Gastrocnemius medialis (tissue), 4 donors: ENCODE measurements at regions of chr2 and their contacts with region 1.

Region 1: GRCh38 chr2:113337809-113338208 is 59.1 kb upstream of the PAX8 start:
- DNase-seq: peak; percentile 87 to 94
- ATAC-seq: peak; percentile 89 to 92
- H3K4me3 ChIP-seq: no peak overlapping the region
- H3K27ac ChIP-seq: peak overlapping the region; percentile 78 to 84 (median 82)
- H3K4me1 ChIP-seq: peaks cover 23 to 39% of the 10 kb centered on the region in 2 donors
- H3K27me3 ChIP-seq: no peaks in the 10 kb centered on the region
- CTCF ChIP-seq: no peak
- POLR2A ChIP-seq: no peak

Region 2: DNA sequence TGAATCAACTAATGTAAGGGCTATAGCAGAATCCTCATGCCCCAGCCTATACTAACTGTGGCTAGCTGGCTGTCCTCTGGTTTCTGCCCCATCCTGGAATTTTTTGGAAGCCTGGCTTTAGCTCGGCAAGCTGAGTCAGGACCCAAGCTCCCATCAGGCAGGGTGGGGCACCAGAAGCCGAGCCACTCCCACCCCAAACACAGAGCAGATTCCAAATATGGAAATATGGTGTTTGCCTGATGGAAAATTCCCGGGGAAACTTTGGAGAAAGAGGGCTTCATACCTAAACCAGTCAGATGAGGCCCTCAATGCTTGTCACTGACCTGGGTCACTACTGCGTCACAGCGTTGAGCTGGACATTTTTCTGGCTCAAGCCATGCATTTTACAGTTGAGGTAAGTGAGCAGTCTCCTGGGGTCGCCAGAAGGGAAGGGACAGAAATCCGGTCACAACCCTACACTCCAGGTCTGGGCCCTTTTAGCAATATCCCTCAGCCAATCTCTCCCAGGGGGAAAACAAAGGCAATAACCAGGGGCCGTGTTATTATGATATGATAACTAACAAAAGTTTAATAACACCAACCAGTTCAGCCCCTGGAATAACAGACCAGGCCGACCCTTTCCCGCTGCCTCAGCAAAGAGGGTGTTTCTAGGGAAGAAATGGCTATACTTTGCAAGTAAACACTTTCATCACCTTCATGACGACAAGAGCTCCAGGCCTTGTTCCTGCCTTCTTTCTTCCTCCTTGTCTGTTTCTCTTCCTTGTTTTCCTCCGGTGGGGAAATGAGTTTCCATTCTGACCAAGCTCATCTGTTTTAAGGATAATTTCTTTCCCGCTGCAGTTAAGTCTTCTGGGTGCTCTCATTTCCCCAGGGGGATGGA is 126.3 kb before region 1 on chr2:
- in situ Hi-C with region 1: no loop called
- intact Hi-C with region 1: no loop called
- DNase-seq: peak in 1 of 2 donors; percentile 53
- ATAC-seq: peak; percentile 61 to 66
- H3K4me3 ChIP-seq: peak overlapping the region in 1 of 4 donors; percentile 4
- H3K27ac ChIP-seq: peak overlapping the region; percentile 56 to 63 (median 58)
- H3K4me1 ChIP-seq: peaks cover 5 to 6% of the 10 kb centered on the region in 2 donors
- H3K27me3 ChIP-seq: no peaks in the 10 kb centered on the region
- CTCF ChIP-seq: no peak
- POLR2A ChIP-seq: peak in 1 of 2 donors; percentile 42

Region 3: GRCh38 chr2:113309655-113310387 is 28.0 kb before region 1 on chr2:
- in situ Hi-C with region 1: no loop called
- intact Hi-C with region 1: loop called (anchors 2 kb)
- DNase-seq: peak; percentile 63 to 85
- ATAC-seq: peak; percentile 85 to 89
- H3K4me3 ChIP-seq: no peak overlapping the region
- H3K27ac ChIP-seq: peak overlapping the region; percentile 62 to 82 (median 74)
- H3K4me1 ChIP-seq: peaks cover 8 to 19% of the 10 kb centered on the region in 2 donors
- H3K27me3 ChIP-seq: no peaks in the 10 kb centered on the region
- CTCF ChIP-seq: no peak
- POLR2A ChIP-seq: no peak